ENCODE measurements at regions of chr1 and their contacts with region 1.

Region 1: GRCh38 chr1:76154206-76154956 is 79.8 kb downstream of the ST6GALNAC3 start:
- DNase-seq: peak; percentile 81
- H3K4me3 ChIP-seq: peak overlapping the region in 2 of 3 experiments; percentile 3 to 67
- H3K27ac ChIP-seq: no peak overlapping the region
- H3K4me1 ChIP-seq: peaks cover 10% of the 10 kb centered on the region
- H3K27me3 ChIP-seq: no peaks in the 10 kb centered on the region
- CTCF ChIP-seq: peak; percentile 94 to 97
- POLR2A ChIP-seq: no peak

Region 2: GRCh38 chr1:76035053-76035452 is 119.3 kb before region 1 on chr1:
- CTCF ChIA-PET with region 1: interaction called, 35 read pairs
- POLR2A ChIA-PET with region 1: no interaction called
- dilution Hi-C with region 1: no loop called
- intact Hi-C with region 1: loop called (anchors 5 kb)
- DNase-seq: peak; percentile 26
- H3K4me3 ChIP-seq: no peak overlapping the region
- H3K27ac ChIP-seq: no peak overlapping the region
- H3K4me1 ChIP-seq: no peaks in the 10 kb centered on the region
- H3K27me3 ChIP-seq: peaks cover 0 to 4% of the 10 kb centered on the region in 2 experiments
- CTCF ChIP-seq: peak; percentile 23 to 25
- POLR2A ChIP-seq: no peak

Region 3: DNA sequence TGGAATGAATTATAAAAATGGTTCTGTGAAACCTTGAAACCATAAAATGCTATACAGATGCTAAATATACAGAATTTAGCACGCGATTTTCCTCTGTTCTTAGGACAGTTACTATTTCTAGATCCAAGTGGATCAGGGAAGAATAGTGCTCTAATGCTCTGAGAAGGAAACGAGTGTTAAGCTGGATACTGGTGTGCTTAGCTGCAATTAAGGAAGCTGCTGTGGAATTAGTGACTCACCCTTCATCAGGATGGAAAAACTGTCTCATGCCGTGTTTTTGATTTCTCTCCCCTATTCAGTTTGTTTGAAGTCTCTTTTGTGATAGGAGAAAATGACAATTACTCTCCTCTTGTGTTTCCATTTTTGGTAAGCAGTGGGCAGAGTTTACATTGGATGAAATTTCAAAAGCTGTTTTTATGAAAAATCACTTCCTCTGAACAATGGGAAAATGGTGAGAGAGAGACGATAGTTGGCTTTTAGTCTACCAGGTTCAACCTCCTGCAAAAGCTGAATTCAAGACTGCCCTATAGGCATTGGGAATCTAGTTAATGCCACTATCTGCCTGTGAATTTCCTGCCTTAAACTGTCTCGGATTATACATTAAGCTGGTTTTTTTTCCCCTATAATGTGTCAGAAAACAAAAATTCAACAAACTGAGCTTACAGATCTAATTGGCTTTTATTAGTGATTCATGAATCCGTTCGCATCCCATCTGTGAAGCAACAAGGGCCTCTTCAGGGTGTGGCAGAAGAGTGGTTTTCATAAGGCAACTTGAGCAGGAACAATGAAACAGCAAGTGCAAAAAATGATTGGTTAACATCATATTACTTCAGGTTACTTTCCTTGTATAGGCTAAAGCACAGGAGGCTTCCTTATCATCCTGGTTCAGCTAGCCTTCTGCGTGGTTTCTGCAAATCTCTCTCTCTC is 100.0 kb after region 1 on chr1:
- CTCF ChIA-PET with region 1: interaction called, 4 read pairs
- POLR2A ChIA-PET with region 1: no interaction called
- dilution Hi-C with region 1: no loop called
- intact Hi-C with region 1: loop called (anchors 1 kb)
- DNase-seq: peak; percentile 99
- H3K4me3 ChIP-seq: peak overlapping the region in 1 of 3 experiments; percentile 33
- H3K27ac ChIP-seq: peak overlapping the region; percentile 89
- H3K4me1 ChIP-seq: peaks cover 26% of the 10 kb centered on the region
- H3K27me3 ChIP-seq: no peaks in the 10 kb centered on the region
- CTCF ChIP-seq: no peak
- POLR2A ChIP-seq: no peak

Region 4: DNA sequence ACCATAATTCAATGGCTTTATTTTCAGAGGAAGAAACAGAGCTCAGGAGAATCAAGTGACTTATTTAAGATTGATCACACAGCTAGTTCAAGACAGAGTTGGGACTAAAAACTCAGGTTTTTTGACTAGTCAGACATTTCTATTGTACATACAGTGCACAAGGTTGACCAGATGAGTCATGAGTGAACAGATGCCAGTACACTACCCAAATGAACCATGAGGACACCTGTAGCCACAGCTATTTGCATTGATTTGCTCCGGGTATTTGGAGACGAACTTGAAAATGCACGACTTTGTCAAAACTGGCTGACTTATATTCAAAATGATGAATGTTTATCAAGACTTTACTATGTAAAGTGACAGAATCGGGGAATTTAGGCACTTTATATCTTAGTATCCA is 551.2 kb after region 1 on chr1:
- CTCF ChIA-PET with region 1: no interaction called
- POLR2A ChIA-PET with region 1: no interaction called
- dilution Hi-C with region 1: no loop called
- intact Hi-C with region 1: loop called (anchors 5 kb)
- DNase-seq: no peak
- H3K4me3 ChIP-seq: no peak overlapping the region
- H3K27ac ChIP-seq: no peak overlapping the region
- H3K4me1 ChIP-seq: no peaks in the 10 kb centered on the region
- H3K27me3 ChIP-seq: no peaks in the 10 kb centered on the region
- CTCF ChIP-seq: no peak
- POLR2A ChIP-seq: no peak

Region 5: GRCh38 chr1:77007675-77008074 is 853.3 kb after region 1 on chr1:
- CTCF ChIA-PET with region 1: no interaction called
- POLR2A ChIA-PET with region 1: no interaction called
- dilution Hi-C with region 1: no loop called
- intact Hi-C with region 1: loop called (anchors 5 kb)
- DNase-seq: no peak
- H3K4me3 ChIP-seq: no peak overlapping the region
- H3K27ac ChIP-seq: no peak overlapping the region
- H3K4me1 ChIP-seq: no peaks in the 10 kb centered on the region
- H3K27me3 ChIP-seq: no peaks in the 10 kb centered on the region
- CTCF ChIP-seq: no peak
- POLR2A ChIP-seq: no peak

Region 6: GRCh38 chr1:77143529-77144121 is 989.2 kb after region 1 on chr1:
- CTCF ChIA-PET with region 1: interaction called, 63 read pairs
- POLR2A ChIA-PET with region 1: no interaction called
- dilution Hi-C with region 1: no loop called
- intact Hi-C with region 1: loop called (anchors 1 kb)
- DNase-seq: peak; percentile 16
- H3K4me3 ChIP-seq: no peak overlapping the region
- H3K27ac ChIP-seq: no peak overlapping the region
- H3K4me1 ChIP-seq: no peaks in the 10 kb centered on the region
- H3K27me3 ChIP-seq: no peaks in the 10 kb centered on the region
- CTCF ChIP-seq: no peak
- POLR2A ChIP-seq: no peak

Measured in endothelial cell of umbilical vein (primary cell).